ENCODE measurements at regions of chr2 and their contacts with region 1.

Region 1: GRCh38 chr2:219002395-219003266 is 9.4 kb upstream of the CRYBA2 start:
- DNase-seq: peak; percentile 82 to 93
- ATAC-seq: peak; percentile 84 to 93
- H3K4me3 ChIP-seq: peak overlapping the region; percentile 59
- H3K27ac ChIP-seq: peak overlapping the region; percentile 64 to 83
- H3K4me1 ChIP-seq: peaks cover 7% of the 10 kb centered on the region
- CTCF ChIP-seq: peak; percentile 68
- EP300 ChIP-seq: no peak
- POLR2A ChIP-seq: peak; percentile 52
- RAD21 ChIP-seq: 0 out of 5 replicates have a peak, but pooled peaks have one; percentile 17 to 19

Region 2: GRCh38 chr2:219020604-219021365 is 18.2 kb after region 1 on chr2:
- CTCF ChIA-PET with region 1: interaction called, 53 read pairs
- POLR2A ChIA-PET with region 1: no interaction called
- DNase-seq: no peak
- ATAC-seq: no peak
- H3K4me3 ChIP-seq: no peak overlapping the region
- H3K27ac ChIP-seq: no peak overlapping the region
- H3K4me1 ChIP-seq: no peaks in the 10 kb centered on the region
- CTCF ChIP-seq: no peak
- EP300 ChIP-seq: no peak
- POLR2A ChIP-seq: no peak
- RAD21 ChIP-seq: no peak

Region 3: GRCh38 chr2:219041252-219041651 is 38.6 kb after region 1 on chr2 and contains the start of gene CFAP65:
- CTCF ChIA-PET with region 1: interaction called, 12 read pairs
- POLR2A ChIA-PET with region 1: no interaction called
- DNase-seq: peak; percentile 53 to 68
- ATAC-seq: peak; percentile 75 to 85
- H3K4me3 ChIP-seq: peak within 1 kb of the TSS; percentile 49
- H3K27ac ChIP-seq: no peak within 1 kb of the TSS
- H3K4me1 ChIP-seq: peaks cover 3% of the 10 kb centered on the region; the same call in 1 of the 3 replicates
- CTCF ChIP-seq: no peak
- EP300 ChIP-seq: no peak
- POLR2A ChIP-seq: no peak
- RAD21 ChIP-seq: no peak
- polyA plus RNA-seq, gene CFAP65: 0.09 and 0.12 TPM in 2 replicates

Measured in A549 (cell line).